Heart right ventricle (tissue), 16 donors: ENCODE measurements at regions of chr16 and their contacts with region 1.

Region 1: GRCh38 chr16:20900299-20901067 is at the starts of genes DCUN1D3 and LYRM1:
- DNase-seq: peak; percentile 96 to 97
- ATAC-seq: peak; percentile 91 to 96 (median 94)
- H3K4me3 ChIP-seq: peak within 1 kb of the TSS; percentile 62 to 86 (median 76)
- H3K27ac ChIP-seq: peak within 1 kb of the TSS; percentile 95 to 99 (median 98)
- H3K4me1 ChIP-seq: peaks cover 5 to 79% (median 67%) of the 10 kb centered on the region in 9 donors
- H3K27me3 ChIP-seq: no peaks in the 10 kb centered on the region
- CTCF ChIP-seq: no peak
- total RNA-seq, gene DCUN1D3: 7.8 to 32.6 (median 11.2) TPM
- total RNA-seq, gene LYRM1: 37.4 to 69.1 (median 48.9) TPM

Region 2: GRCh38 chr16:20859699-20860098 is 40.8 kb before region 1 on chr16:
- intact Hi-C with region 1: loop called in 6 of 10 experiments (anchors 5 to 10 kb)
- DNase-seq: no peak
- ATAC-seq: peak in 5 of 8 donors; percentile 28 to 36 (median 32)
- H3K4me3 ChIP-seq: no peak overlapping the region
- H3K27ac ChIP-seq: peak overlapping the region in 9 of 10 donors; percentile 3 to 84 (median 53)
- H3K4me1 ChIP-seq: peaks cover 6 to 60% (median 45%) of the 10 kb centered on the region in 9 donors
- H3K27me3 ChIP-seq: no peaks in the 10 kb centered on the region
- CTCF ChIP-seq: no peak

Region 3: DNA sequence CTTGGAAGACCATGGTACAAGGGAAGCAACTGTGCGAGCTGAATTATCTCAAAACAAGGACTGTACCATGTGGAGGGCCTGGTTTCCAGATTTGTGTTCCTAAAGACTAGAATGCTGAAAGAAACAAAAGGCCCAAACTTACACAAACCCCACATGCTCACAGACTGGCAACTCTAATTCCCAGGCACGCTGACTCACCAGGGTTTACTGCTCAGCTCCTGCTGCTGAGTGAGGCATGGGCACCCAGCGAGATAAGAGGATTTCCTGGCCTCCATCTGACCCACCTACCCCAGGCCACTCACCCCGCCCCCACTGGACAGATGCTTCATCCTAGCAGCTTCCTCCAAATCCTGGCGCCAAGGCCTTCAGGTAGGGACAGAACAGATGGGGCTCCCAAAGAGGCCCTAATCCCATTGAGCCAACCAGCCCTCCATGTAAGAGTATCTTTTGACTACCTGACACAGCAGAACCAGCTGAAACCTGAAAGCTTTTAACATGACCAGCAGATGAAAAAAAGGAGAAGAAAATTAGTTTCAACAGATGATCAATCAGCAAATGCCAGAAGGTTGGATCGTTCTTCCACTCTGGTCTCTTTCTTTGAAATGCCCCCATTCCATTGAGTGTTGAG is 34.2 kb before region 1 on chr16:
- intact Hi-C with region 1: loop called in 4 of 10 experiments (anchors 5 kb)
- DNase-seq: peak; percentile 29 to 34
- ATAC-seq: peak in 7 of 8 donors; percentile 12 to 66 (median 50)
- H3K4me3 ChIP-seq: no peak overlapping the region
- H3K27ac ChIP-seq: peak overlapping the region; percentile 11 to 80 (median 58)
- H3K4me1 ChIP-seq: peaks cover 25 to 83% (median 78%) of the 10 kb centered on the region in 9 donors
- H3K27me3 ChIP-seq: no peaks in the 10 kb centered on the region
- CTCF ChIP-seq: no peak

Region 4: DNA sequence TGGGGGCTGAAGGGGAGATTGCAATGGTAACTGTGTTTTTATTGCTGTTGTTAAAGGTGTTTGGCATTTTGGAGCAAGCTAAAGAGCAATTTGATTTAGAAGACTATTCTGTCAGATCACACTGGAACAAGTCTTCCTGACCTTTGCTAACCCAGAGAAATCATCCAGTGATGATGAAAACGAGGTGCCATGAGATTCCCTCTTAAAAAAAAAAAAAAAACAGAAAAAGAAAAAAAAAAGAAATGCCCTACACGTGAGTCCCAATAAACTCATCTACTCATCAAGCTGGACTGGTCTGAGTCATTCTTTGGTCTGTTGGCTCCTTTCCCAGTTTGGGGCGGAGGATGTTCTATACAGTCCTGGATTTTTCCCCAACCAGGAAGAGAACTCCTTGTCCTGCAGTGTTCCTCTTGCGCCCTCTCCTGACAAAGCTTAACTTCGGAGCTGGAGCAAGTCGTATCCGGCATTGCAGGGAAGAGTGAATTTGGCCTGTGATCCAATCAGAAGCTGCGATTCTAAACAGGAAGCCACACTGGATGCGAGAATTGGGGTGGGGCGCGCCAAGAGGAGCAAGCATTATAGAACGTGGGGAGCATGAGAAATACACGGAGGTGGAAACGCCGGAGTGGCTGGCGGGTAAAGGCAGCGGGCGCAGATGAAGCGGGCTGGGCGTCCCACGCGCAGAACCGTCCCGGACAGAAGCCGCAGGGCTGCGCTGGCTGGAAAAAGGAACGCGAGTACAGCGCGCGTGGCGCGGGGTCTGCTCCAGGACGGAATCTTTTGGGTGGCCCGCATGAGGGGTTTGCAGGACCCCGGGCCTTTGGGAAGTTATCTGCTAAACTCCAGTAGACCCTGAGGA is 400.1 kb after region 1 on chr16:
- intact Hi-C with region 1: no loop called
- DNase-seq: peak; percentile 72 to 98
- ATAC-seq: peak; percentile 93 to 99 (median 96)
- H3K4me3 ChIP-seq: peak overlapping the region; percentile 7 to 79 (median 64)
- H3K27ac ChIP-seq: peak overlapping the region; percentile 14 to 87 (median 73)
- H3K4me1 ChIP-seq: peaks cover 0 to 19% (median 7%) of the 10 kb centered on the region in 9 donors
- H3K27me3 ChIP-seq: peaks cover 0 to 22% (median 0%) of the 10 kb centered on the region in 7 donors
- CTCF ChIP-seq: peak; percentile 62 to 97 (median 82)